ENCODE measurements at regions of chr7 and their contacts with region 1.

Region 1: DNA sequence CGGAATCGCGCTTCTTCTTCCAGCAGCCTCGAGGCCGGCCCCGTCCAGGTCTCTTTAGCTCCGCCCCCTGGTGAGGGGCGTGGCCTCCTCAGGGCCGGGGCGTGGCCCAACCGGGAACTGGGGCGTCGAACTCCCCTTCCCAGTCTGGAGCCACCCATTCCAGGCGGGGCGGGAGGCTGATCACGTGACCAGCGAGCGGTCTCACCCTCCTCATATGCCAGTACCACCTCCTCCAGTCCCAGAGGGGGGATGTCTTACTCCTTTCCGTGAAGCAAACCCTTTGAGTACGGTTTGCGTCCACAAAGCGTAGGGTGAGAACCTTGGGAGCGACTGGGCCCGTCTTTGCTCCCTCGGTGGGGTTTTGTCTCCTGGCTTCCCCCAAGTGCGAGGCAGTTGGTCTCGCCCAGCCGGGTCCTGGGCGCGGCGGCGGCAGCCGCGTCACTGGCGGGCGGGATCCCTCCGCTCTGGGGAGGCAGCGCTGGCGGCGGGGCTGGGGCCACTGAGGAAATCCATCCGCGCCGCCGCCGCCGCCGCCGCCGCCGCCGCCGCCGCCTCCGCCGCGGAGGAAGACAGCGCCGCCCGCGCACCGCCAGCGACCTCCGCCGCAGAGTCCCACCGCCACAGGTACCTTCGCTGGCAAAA is at the start of gene GNB2:
- DNase-seq: peak; percentile 92 to 100 (median 96)
- ATAC-seq: peak; percentile 75
- H3K4me3 ChIP-seq: peak within 1 kb of the TSS; percentile 82
- H3K4me3 Mint-ChIP-seq: peak within 1 kb of the TSS; percentile 89 to 99 (median 96)
- H3K27ac ChIP-seq: peak within 1 kb of the TSS; percentile 98
- H3K27ac Mint-ChIP-seq: peak within 1 kb of the TSS; percentile 88 to 97 (median 95)
- H3K4me1 ChIP-seq: no peaks in the 10 kb centered on the region
- H3K4me1 Mint-ChIP-seq: peaks cover 9 to 25% (median 15%) of the 10 kb centered on the region in 7 donors
- H3K27me3 ChIP-seq: no peaks in the 10 kb centered on the region
- H3K27me3 Mint-ChIP-seq: peaks cover 0 to 17% (median 0%) of the 10 kb centered on the region in 5 donors
- total RNA-seq, gene GNB2: 98.2 to 215 (median 132) TPM

Region 2: GRCh38 chr7:100538654-100539435 is 134.6 kb before region 1 on chr7 and contains the start of gene AGFG2:
- CTCF ChIA-PET with region 1: no interaction called
- POLR2A ChIA-PET with region 1: no interaction called
- intact Hi-C with region 1: loop called (anchors 1 kb)
- DNase-seq: peak; percentile 98 to 100 (median 100)
- ATAC-seq: peak; percentile 99
- H3K4me3 ChIP-seq: peak within 1 kb of the TSS; percentile 73
- H3K4me3 Mint-ChIP-seq: peak within 1 kb of the TSS; percentile 85 to 100 (median 96)
- H3K27ac ChIP-seq: peak within 1 kb of the TSS; percentile 64
- H3K27ac Mint-ChIP-seq: peak within 1 kb of the TSS; percentile 82 to 97 (median 90)
- H3K4me1 ChIP-seq: peaks cover 30 to 39% of the 10 kb centered on the region in 2 donors
- H3K4me1 Mint-ChIP-seq: peaks cover 26 to 53% (median 48%) of the 10 kb centered on the region in 7 donors
- H3K27me3 ChIP-seq: no peaks in the 10 kb centered on the region
- H3K27me3 Mint-ChIP-seq: peaks cover 0 to 2% (median 0%) of the 10 kb centered on the region in 5 donors
- total RNA-seq, gene AGFG2: 15.8 to 42.4 (median 23.3) TPM

Region 3: GRCh38 chr7:100611974-100612729 is 61.3 kb before region 1 on chr7 and contains the start of gene MOSPD3:
- CTCF ChIA-PET with region 1: interaction called, 3 read pairs
- POLR2A ChIA-PET with region 1: interaction called, 24 read pairs
- intact Hi-C with region 1: loop called (anchors 1 kb)
- DNase-seq: peak; percentile 97 to 99 (median 98)
- ATAC-seq: peak; percentile 94
- H3K4me3 ChIP-seq: peak within 1 kb of the TSS; percentile 99
- H3K4me3 Mint-ChIP-seq: peak within 1 kb of the TSS; percentile 92 to 99 (median 98)
- H3K27ac ChIP-seq: peak within 1 kb of the TSS; percentile 92
- H3K27ac Mint-ChIP-seq: peak within 1 kb of the TSS; percentile 97 to 100 (median 100)
- H3K4me1 ChIP-seq: peaks cover 10 to 16% of the 10 kb centered on the region in 2 donors
- H3K4me1 Mint-ChIP-seq: peaks cover 18 to 29% (median 24%) of the 10 kb centered on the region in 7 donors
- H3K27me3 ChIP-seq: no peaks in the 10 kb centered on the region
- H3K27me3 Mint-ChIP-seq: peaks cover 0 to 8% (median 0%) of the 10 kb centered on the region in 5 donors
- total RNA-seq, gene MOSPD3: 8.8 to 54.9 (median 13.1) TPM

Region 4: DNA sequence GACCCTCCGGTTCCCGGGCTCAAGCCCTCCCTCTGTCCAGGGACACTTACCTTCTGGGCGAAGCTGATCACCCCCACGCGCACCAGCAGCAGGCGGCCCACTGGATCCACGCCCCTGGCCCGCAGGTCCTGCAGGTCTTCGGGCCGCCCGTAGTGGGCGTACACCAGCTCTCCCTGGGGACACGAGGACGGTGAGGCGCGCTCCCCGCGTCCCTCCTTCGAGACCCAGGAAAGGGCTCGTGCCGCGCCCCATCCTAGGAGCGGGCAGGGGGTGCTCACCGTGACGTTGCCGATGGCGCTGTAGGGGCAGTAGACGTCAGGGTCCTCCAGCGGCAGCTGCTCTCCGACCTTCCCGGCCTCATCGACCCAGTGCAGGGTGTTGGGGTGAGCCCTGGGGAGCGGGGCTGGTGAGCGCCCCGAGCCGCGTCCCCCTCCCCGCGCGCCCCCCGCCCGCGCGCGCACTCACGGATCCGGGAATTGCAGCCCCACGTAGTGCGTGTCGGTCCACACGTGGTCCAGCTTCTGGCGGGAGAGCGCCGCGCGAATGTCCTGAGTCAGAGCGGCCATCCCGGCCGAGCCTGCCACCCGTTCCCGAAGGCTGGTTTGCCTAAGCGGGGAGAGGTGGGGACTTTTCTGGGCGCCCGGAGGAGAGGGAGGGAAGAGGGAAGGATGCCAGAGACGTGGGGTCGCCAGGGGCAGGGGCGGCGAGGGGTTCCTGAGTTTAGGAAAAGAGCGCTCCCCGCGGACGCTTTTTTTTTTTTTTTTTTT is 40.3 kb before region 1 on chr7:
- CTCF ChIA-PET with region 1: no interaction called
- POLR2A ChIA-PET with region 1: interaction called, 11 read pairs
- intact Hi-C with region 1: loop called (anchors 1 kb)
- DNase-seq: peak in 8 of 9 donors; percentile 39 to 72 (median 45)
- ATAC-seq: peak; percentile 79
- H3K4me3 ChIP-seq: peak overlapping the region; percentile 68
- H3K4me3 Mint-ChIP-seq: peak overlapping the region; percentile 79 to 89 (median 84)
- H3K27ac ChIP-seq: peak overlapping the region; percentile 56
- H3K27ac Mint-ChIP-seq: peak overlapping the region in 7 of 9 donors; percentile 40 to 92 (median 63)
- H3K4me1 ChIP-seq: no peaks in the 10 kb centered on the region
- H3K4me1 Mint-ChIP-seq: peaks cover 10 to 42% (median 25%) of the 10 kb centered on the region in 7 donors
- H3K27me3 ChIP-seq: no peaks in the 10 kb centered on the region
- H3K27me3 Mint-ChIP-seq: peaks cover 0 to 4% (median 0%) of the 10 kb centered on the region in 5 donors

Region 5: GRCh38 chr7:100691676-100692577 is 18.5 kb after region 1 on chr7:
- CTCF ChIA-PET with region 1: interaction called, 33 read pairs
- POLR2A ChIA-PET with region 1: interaction called, 14 read pairs
- intact Hi-C with region 1: loop called (anchors 1 kb)
- DNase-seq: peak; percentile 64 to 85 (median 78)
- ATAC-seq: peak; percentile 79
- H3K4me3 ChIP-seq: peak overlapping the region; percentile 67
- H3K4me3 Mint-ChIP-seq: peak overlapping the region; percentile 92 to 100 (median 94)
- H3K27ac ChIP-seq: peak overlapping the region; percentile 73
- H3K27ac Mint-ChIP-seq: peak overlapping the region; percentile 62 to 96 (median 95)
- H3K4me1 ChIP-seq: peaks cover 23 to 27% of the 10 kb centered on the region in 2 donors
- H3K4me1 Mint-ChIP-seq: peaks cover 29 to 54% (median 41%) of the 10 kb centered on the region in 7 donors
- H3K27me3 ChIP-seq: no peaks in the 10 kb centered on the region
- H3K27me3 Mint-ChIP-seq: peaks cover 0 to 16% (median 0%) of the 10 kb centered on the region in 5 donors

Measured in naive thymus-derived CD4-positive, alpha-beta T cell (primary cell).